Esophagus muscularis mucosa (tissue), 4 donors: ENCODE measurements at regions of chr10 and their contacts with region 1.

Region 1: DNA sequence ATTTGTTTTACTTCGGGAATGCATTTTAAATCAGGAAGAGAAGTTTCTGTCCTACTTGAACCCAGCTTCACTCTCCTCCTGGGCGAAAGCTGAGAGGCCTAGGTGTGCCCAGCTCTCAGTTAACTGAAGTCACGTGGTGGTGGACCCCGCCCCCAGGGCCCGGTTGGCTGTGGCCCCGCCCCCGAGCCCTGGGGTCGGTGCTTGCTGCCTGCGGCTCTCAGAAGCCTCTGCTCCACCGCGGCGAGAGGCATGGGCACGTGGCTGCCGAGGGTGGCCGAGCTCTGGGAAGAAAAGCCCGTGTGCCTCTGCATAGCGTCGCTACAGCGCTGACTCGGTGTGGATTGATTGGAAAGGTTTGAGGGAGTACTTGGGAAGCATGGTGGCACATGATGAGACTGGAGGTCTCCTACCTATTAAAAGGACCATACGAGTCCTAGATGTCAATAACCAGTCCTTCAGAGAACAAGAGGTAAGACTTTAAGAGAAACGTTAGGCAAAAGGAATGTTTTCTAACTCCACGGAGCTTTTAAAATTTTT is 34.1 kb downstream of the NET1 start:
- DNase-seq: peak; percentile 98
- H3K4me3 ChIP-seq: peak overlapping the region; percentile 59 to 74 (median 66)
- H3K27ac ChIP-seq: peak overlapping the region; percentile 74 to 85 (median 78)
- H3K4me1 ChIP-seq: peaks cover 6 to 49% (median 39%) of the 10 kb centered on the region in 4 donors
- H3K27me3 ChIP-seq: no peaks in the 10 kb centered on the region
- CTCF ChIP-seq: no peak
- EP300 ChIP-seq: no peak
- POLR2A ChIP-seq: peak; percentile 68

Region 2: DNA sequence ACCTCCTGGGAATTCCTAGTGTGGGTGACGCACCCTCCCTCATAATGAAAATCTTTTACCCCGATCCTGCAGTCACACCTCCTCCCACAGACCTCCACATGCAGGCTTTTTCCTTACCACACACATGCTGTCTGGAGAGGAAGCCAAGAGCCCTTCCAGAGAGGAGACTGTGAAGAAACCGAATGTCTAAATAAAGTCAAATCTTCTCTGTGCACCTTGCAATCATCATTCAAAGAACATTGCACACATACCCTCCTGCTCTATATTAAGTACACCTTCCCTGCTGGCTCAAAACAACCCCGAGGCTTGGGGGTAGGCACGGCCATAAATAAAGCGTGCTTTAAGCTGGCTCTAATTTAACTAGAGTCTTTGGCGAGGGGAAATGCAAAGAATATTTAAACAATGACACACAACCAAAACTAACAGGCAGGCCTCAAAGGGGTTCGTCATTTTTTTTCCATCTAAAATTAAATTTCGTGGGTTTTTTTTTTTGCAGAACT is 113.2 kb after region 1 on chr10:
- intact Hi-C with region 1: loop called (anchors 2 kb)
- DNase-seq: no peak
- H3K4me3 ChIP-seq: no peak overlapping the region
- H3K27ac ChIP-seq: peak overlapping the region; percentile 77 to 84 (median 78)
- H3K4me1 ChIP-seq: peaks cover 0 to 84% (median 75%) of the 10 kb centered on the region in 4 donors
- H3K27me3 ChIP-seq: no peaks in the 10 kb centered on the region
- CTCF ChIP-seq: no peak
- EP300 ChIP-seq: peak; percentile 14
- POLR2A ChIP-seq: no peak

Region 3: GRCh38 chr10:5623081-5623748 is 176.8 kb after region 1 on chr10:
- intact Hi-C with region 1: loop called (anchors 2 kb)
- DNase-seq: peak; percentile 93
- H3K4me3 ChIP-seq: peak overlapping the region in 1 of 4 donors; percentile 13
- H3K27ac ChIP-seq: peak overlapping the region in 2 of 4 donors; percentile 14 to 62
- H3K4me1 ChIP-seq: peaks cover 3 to 45% (median 32%) of the 10 kb centered on the region in 4 donors
- H3K27me3 ChIP-seq: no peaks in the 10 kb centered on the region
- CTCF ChIP-seq: peak; percentile 91 to 97 (median 92)
- EP300 ChIP-seq: no peak
- POLR2A ChIP-seq: no peak